Activated B cell treated with CpG ODN at 0.5 μM for 24 hours (primary cell): ENCODE measurements at regions of chr16 and their contacts with region 1.

Region 1: GRCh38 chr16:68264128-68265077 is at the start of gene SLC7A6:
- DNase-seq: peak; percentile 91
- ATAC-seq: peak; percentile 79
- H3K4me3 Mint-ChIP-seq: peak within 1 kb of the TSS; percentile 96
- H3K27ac Mint-ChIP-seq: peak within 1 kb of the TSS; percentile 98
- H3K4me1 Mint-ChIP-seq: peaks cover 49% of the 10 kb centered on the region
- H3K27me3 Mint-ChIP-seq: no peaks in the 10 kb centered on the region
- CTCF ChIP-seq: no peak
- total RNA-seq, gene SLC7A6: 52.5 and 54.1 TPM in 2 replicates

Region 2: DNA sequence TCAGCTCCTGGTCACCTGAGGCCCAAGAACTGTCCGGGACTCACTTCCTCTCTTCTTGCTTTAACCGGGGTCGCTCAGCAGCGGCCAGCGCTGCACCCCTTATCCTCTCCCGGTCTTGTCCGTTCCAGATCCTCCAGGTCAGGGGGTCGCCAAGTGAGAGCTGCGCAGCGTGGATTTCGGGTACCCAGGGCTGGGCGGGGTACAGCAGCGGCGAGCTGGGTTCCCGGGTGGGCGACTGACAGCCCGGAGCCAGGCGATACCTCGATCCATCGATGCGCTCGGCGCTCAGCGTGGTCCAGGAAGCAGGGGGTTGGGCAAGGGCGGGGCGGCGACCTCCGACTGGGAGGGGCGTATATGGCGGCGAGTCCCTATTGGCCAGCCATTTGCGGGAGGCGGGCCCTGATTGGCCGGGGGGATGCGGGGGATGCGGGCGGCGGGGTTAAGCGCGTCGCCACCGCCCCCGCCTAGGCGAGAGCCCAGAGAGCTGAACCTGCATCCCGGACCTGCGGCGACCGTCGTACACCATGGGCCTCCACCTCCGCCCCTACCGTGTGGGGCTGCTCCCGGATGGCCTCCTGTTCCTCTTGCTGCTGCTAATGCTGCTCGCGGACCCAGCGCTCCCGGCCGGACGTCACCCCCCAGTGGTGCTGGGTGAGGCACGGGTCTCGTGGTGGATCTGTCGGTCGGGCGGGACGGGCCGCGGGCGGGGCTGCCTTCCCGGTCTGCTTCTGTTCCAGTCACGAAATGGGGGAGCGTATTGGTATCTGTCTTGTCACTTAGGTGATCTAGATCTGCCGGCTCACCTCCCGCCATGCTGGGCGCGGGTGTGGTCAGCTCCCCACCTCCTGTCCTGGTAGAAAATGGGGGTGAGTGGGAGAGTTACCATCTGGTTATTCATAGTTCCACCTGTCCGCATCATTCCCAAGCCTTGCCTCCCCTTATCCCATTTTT is 19.2 kb before region 1 on chr16 and contains the start of gene PLA2G15:
- CTCF ChIA-PET with region 1: interaction called, 11 read pairs
- POLR2A ChIA-PET with region 1: interaction called, 10 read pairs
- intact Hi-C with region 1: loop called (anchors 1 kb)
- DNase-seq: peak; percentile 96
- ATAC-seq: peak; percentile 99
- H3K4me3 Mint-ChIP-seq: peak within 1 kb of the TSS; percentile 98
- H3K27ac Mint-ChIP-seq: peak within 1 kb of the TSS; percentile 85
- H3K4me1 Mint-ChIP-seq: peaks cover 32% of the 10 kb centered on the region
- H3K27me3 Mint-ChIP-seq: no peaks in the 10 kb centered on the region
- CTCF ChIP-seq: no peak
- total RNA-seq, gene PLA2G15: 5.7 and 8.6 TPM in 2 replicates

Region 3: GRCh38 chr16:68275611-68276191 is 11.3 kb after region 1 on chr16:
- CTCF ChIA-PET with region 1: interaction called, 13 read pairs
- POLR2A ChIA-PET with region 1: interaction called, 5 read pairs
- intact Hi-C with region 1: loop called (anchors 1 kb)
- DNase-seq: no peak
- ATAC-seq: peak; percentile 86
- H3K4me3 Mint-ChIP-seq: peak overlapping the region; percentile 56
- H3K27ac Mint-ChIP-seq: peak overlapping the region; percentile 88
- H3K4me1 Mint-ChIP-seq: peaks cover 51% of the 10 kb centered on the region
- H3K27me3 Mint-ChIP-seq: no peaks in the 10 kb centered on the region
- CTCF ChIP-seq: no peak

Region 4: DNA sequence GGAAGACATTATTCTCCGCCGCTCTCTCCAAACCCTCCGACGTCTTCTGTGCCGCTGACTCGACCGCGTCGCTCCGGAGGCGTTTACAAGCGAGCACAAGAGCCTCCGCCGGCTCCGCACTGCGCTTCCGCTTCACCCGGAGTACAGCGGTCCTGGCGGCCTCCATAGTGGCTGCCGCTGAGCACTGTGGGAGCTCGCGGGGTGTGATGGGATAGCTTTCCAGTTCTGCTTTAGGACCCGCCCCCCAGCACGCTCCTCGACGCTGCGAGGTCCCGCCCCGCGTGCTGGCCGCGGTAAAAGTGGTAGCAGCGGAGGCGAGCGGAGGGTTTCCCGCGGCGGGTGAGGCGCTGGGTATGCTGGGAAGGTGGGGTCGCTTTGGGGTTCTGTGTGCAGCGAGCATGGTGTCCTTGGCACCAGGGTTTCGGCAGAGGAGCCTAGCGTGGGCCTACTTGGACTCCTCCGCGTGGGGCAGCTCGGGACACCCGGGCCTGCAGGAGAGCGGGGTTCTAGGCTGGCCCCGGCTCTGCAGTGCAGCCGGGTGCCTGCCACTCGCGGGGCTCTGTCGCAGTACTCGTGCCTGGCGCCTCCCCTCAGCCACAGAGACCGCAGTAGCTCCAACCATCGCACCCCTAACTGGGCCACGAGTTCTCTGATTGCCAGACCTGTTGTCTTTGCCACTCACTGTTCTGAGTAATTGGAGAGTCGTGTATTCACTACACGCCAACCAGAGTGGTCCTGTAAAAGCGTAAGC is 46.5 kb after region 1 on chr16 and contains the starts of genes PRMT7 and SLC7A6OS:
- CTCF ChIA-PET with region 1: interaction called, 47 read pairs
- POLR2A ChIA-PET with region 1: interaction called, 104 read pairs
- intact Hi-C with region 1: loop called (anchors 1 kb)
- DNase-seq: peak; percentile 87
- ATAC-seq: peak; percentile 99
- H3K4me3 Mint-ChIP-seq: peak within 1 kb of the TSS; percentile 98
- H3K27ac Mint-ChIP-seq: peak within 1 kb of the TSS; percentile 93
- H3K4me1 Mint-ChIP-seq: peaks cover 38% of the 10 kb centered on the region
- H3K27me3 Mint-ChIP-seq: no peaks in the 10 kb centered on the region
- CTCF ChIP-seq: no peak
- total RNA-seq, gene PRMT7: 41.8 and 50.3 TPM in 2 replicates
- total RNA-seq, gene SLC7A6OS: 34.8 and 42.0 TPM in 2 replicates

Region 5: GRCh38 chr16:68382296-68382718 is 117.9 kb after region 1 on chr16:
- CTCF ChIA-PET with region 1: no interaction called
- POLR2A ChIA-PET with region 1: no interaction called
- intact Hi-C with region 1: no loop called
- DNase-seq: no peak
- ATAC-seq: peak; percentile 81
- H3K4me3 Mint-ChIP-seq: peak overlapping the region; percentile 20
- H3K27ac Mint-ChIP-seq: peak overlapping the region; percentile 74
- H3K4me1 Mint-ChIP-seq: peaks cover 63% of the 10 kb centered on the region
- H3K27me3 Mint-ChIP-seq: no peaks in the 10 kb centered on the region
- CTCF ChIP-seq: no peak

Region 6: DNA sequence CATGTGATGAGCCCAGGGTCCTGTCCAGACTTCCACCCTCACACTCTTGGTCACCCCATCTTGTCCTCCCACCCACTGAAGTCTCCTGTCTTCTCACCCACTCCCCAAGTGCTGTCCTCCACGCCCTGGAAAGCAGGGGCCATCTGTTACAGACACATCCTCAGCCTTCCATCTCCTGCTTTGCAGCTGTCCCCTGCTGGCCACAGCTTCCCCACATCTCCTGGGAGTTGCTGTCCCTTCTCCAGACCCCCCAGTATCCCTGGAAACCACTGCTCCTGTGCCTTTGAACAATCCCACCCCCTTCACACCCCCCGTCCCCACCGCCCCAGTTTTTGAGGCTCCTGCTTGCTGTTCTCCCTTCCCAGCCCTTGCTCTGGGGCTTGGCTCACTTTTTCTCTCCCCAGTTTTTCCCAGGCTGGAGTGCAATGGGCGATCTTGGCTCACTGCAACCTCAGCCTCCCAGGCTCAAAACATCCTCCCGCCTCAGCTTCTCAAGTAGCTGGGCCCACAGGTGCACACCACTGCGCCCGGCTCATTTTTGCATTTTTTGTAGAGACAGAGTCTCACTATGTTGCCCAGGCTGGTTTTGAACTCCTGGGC is 244.3 kb after region 1 on chr16:
- CTCF ChIA-PET with region 1: interaction called, 3 read pairs
- POLR2A ChIA-PET with region 1: no interaction called
- intact Hi-C with region 1: loop called (anchors 2 kb)
- DNase-seq: no peak
- ATAC-seq: no peak
- H3K4me3 Mint-ChIP-seq: no peak overlapping the region
- H3K27ac Mint-ChIP-seq: no peak overlapping the region
- H3K4me1 Mint-ChIP-seq: peaks cover 5% of the 10 kb centered on the region
- H3K27me3 Mint-ChIP-seq: peaks cover 8% of the 10 kb centered on the region
- CTCF ChIP-seq: no peak